HCT116 (cell line): ENCODE measurements at regions of chr1 and their contacts with region 1.

Region 1: GRCh38 chr1:178300352-178300699 is 196.4 kb downstream of the CLEC20A start:
- DNase-seq: no peak
- ATAC-seq: peak; percentile 34; the same call in 1 of the 2 replicates
- H3K4me3 ChIP-seq: no peak overlapping the region
- H3K27ac ChIP-seq: no peak overlapping the region
- H3K4me1 ChIP-seq: peaks cover 4 to 8% of the 10 kb centered on the region in 2 experiments; a peak in 2 of 4 replicates
- H3K27me3 ChIP-seq: no peaks in the 10 kb centered on the region
- CTCF ChIP-seq: no peak
- POLR2A ChIP-seq: no peak
- RAD21 ChIP-seq: no peak

Region 2: GRCh38 chr1:177928194-177928593 is 372.1 kb before region 1 on chr1:
- CTCF ChIA-PET with region 1: no interaction called
- POLR2A ChIA-PET with region 1: no interaction called
- RAD21 ChIA-PET with region 1: no interaction called
- intact Hi-C with region 1: no loop called
- DNase-seq: no peak
- ATAC-seq: 0 out of 2 replicates have a peak, but pooled peaks have one; percentile 57
- H3K4me3 ChIP-seq: no peak overlapping the region
- H3K27ac ChIP-seq: no peak overlapping the region
- H3K4me1 ChIP-seq: peaks cover 0 to 9% of the 10 kb centered on the region in 2 experiments; a peak in 1 of 4 replicates
- H3K27me3 ChIP-seq: no peaks in the 10 kb centered on the region
- CTCF ChIP-seq: 0 out of 6 replicates have a peak, but pooled peaks of 1 of the 3 experiments have one; percentile 11
- POLR2A ChIP-seq: no peak
- RAD21 ChIP-seq: 0 out of 2 replicates have a peak, but pooled peaks have one; percentile 19

Region 3: DNA sequence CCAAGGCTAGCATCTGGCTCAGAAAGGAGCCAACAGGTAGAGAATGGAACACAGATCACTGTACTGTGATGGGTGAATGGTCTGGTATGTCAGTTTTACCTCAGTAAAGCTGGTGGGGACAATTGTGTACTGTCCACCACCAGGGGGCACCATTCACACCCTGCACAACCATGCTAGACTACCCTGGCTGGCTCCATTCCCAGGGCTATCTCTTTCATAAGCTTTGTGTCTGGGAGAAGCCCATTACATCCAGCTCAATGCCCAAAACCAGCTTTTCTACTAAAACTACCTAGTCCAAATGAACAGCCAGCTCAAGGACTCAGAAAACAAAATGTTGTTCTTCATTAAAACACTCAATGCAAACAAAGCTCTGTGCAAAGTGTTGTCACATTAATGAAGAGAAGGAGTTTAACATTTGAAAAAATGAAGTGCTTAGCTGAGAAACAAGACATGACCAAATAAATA is 268.4 kb before region 1 on chr1:
- CTCF ChIA-PET with region 1: interaction called, 28 read pairs
- POLR2A ChIA-PET with region 1: no interaction called
- RAD21 ChIA-PET with region 1: no interaction called
- intact Hi-C with region 1: no loop called
- DNase-seq: peak; percentile 66
- ATAC-seq: peak; percentile 98
- H3K4me3 ChIP-seq: no peak overlapping the region
- H3K27ac ChIP-seq: no peak overlapping the region
- H3K4me1 ChIP-seq: peaks cover 0 to 4% of the 10 kb centered on the region in 2 experiments; a peak in 1 of 4 replicates
- H3K27me3 ChIP-seq: no peaks in the 10 kb centered on the region
- CTCF ChIP-seq: peak; percentile 67 to 93 (median 86); a peak in 5 of 6 replicates
- POLR2A ChIP-seq: no peak
- RAD21 ChIP-seq: peak; percentile 86

Region 4: GRCh38 chr1:178262120-178262500 is 38.2 kb before region 1 on chr1:
- CTCF ChIA-PET with region 1: no interaction called
- POLR2A ChIA-PET with region 1: no interaction called
- RAD21 ChIA-PET with region 1: no interaction called
- intact Hi-C with region 1: no loop called
- DNase-seq: no peak
- ATAC-seq: no peak
- H3K4me3 ChIP-seq: no peak overlapping the region
- H3K27ac ChIP-seq: no peak overlapping the region
- H3K4me1 ChIP-seq: peaks cover 0 to 4% of the 10 kb centered on the region in 2 experiments; a peak in 2 of 4 replicates
- H3K27me3 ChIP-seq: no peaks in the 10 kb centered on the region
- CTCF ChIP-seq: no peak
- POLR2A ChIP-seq: no peak
- RAD21 ChIP-seq: no peak

Region 5: DNA sequence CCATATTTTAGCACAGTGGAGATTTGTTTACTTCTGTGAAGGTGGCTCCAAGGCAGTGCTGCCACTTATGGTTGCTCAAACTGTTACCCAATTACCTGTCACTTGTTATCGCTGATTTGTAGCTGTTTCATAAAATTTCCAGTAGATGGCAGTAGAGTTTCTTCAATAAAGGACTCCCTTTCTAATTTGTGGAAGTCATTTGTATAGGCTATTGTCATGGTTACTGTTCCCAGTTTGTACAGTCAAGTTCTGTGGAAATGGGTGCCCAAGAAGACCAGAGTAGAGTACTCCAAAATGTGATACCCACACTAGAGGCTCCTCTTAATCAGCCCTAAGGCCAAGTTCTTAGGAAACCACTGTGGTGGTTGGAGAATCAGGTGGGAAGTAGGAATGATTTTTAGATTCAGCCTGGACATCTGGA is 10.4 kb after region 1 on chr1:
- CTCF ChIA-PET with region 1: interaction called, 38 read pairs
- POLR2A ChIA-PET with region 1: interaction called, 6 read pairs
- RAD21 ChIA-PET with region 1: interaction called in 1 of 2 experiments, 3 read pairs
- intact Hi-C with region 1: no loop called
- DNase-seq: peak; percentile 64
- ATAC-seq: peak; percentile 91
- H3K4me3 ChIP-seq: no peak overlapping the region
- H3K27ac ChIP-seq: no peak overlapping the region
- H3K4me1 ChIP-seq: peaks cover 8 to 15% of the 10 kb centered on the region in 2 experiments; a peak in 3 of 4 replicates
- H3K27me3 ChIP-seq: no peaks in the 10 kb centered on the region
- CTCF ChIP-seq: peak; percentile 58 to 88 (median 87)
- POLR2A ChIP-seq: no peak
- RAD21 ChIP-seq: peak; percentile 92

Region 6: GRCh38 chr1:178412400-178412770 is 112.1 kb after region 1 on chr1:
- CTCF ChIA-PET with region 1: no interaction called
- POLR2A ChIA-PET with region 1: no interaction called
- RAD21 ChIA-PET with region 1: no interaction called
- intact Hi-C with region 1: no loop called
- DNase-seq: no peak
- ATAC-seq: no peak
- H3K4me3 ChIP-seq: no peak overlapping the region
- H3K27ac ChIP-seq: no peak overlapping the region
- H3K4me1 ChIP-seq: peaks cover 0 to 4% of the 10 kb centered on the region in 2 experiments; a peak in 3 of 4 replicates
- H3K27me3 ChIP-seq: no peaks in the 10 kb centered on the region
- CTCF ChIP-seq: no peak
- POLR2A ChIP-seq: no peak
- RAD21 ChIP-seq: no peak

Region 7: DNA sequence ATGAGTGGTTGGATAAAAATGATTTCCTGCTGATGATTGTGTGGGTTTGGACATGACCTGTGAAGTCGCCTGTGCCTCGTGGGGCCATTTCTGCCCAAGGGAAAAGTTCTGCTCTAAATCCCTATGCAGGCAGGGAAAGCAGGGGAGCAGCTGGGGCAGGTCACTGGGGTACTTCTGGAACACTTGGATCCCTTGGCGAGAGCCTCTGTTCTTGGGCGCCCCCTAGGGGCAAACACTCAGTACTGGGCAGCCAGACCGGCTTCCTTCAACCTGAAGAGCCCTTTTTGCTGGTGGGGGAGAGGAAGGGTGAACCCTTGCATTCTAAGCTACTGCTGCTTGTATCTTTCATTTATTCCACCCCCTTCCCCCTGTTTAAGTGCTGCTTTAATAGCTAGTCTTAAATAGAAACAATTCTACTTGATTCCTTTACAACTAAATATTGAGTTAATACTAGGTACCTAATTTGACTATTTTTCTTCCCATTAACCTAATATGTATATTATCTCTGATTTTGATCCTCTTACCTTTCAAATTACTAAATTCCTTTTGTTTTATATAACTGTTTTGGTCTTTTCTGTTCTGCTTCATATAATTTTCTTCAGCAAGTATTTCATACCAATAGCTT is 201.5 kb after region 1 on chr1:
- CTCF ChIA-PET with region 1: interaction called, 31 read pairs
- POLR2A ChIA-PET with region 1: no interaction called
- RAD21 ChIA-PET with region 1: no interaction called
- intact Hi-C with region 1: no loop called
- DNase-seq: peak; percentile 48
- ATAC-seq: peak; percentile 91
- H3K4me3 ChIP-seq: no peak overlapping the region
- H3K27ac ChIP-seq: no peak overlapping the region
- H3K4me1 ChIP-seq: peaks cover 0 to 7% of the 10 kb centered on the region in 2 experiments; a peak in 1 of 4 replicates
- H3K27me3 ChIP-seq: no peaks in the 10 kb centered on the region
- CTCF ChIP-seq: peak; percentile 80 to 95 (median 85)
- POLR2A ChIP-seq: no peak
- RAD21 ChIP-seq: peak; percentile 80

Region 8: GRCh38 chr1:178847396-178847849 is 547.1 kb after region 1 on chr1:
- CTCF ChIA-PET with region 1: no interaction called
- POLR2A ChIA-PET with region 1: no interaction called
- RAD21 ChIA-PET with region 1: no interaction called
- intact Hi-C with region 1: no loop called
- DNase-seq: peak; percentile 22
- ATAC-seq: peak; percentile 59; the same call in 1 of the 2 replicates
- H3K4me3 ChIP-seq: no peak overlapping the region
- H3K27ac ChIP-seq: no peak overlapping the region; the same call in 1 of the 2 replicates
- H3K4me1 ChIP-seq: peaks cover 6 to 12% of the 10 kb centered on the region in 2 experiments; a peak in 2 of 4 replicates
- H3K27me3 ChIP-seq: no peaks in the 10 kb centered on the region
- CTCF ChIP-seq: no peak
- POLR2A ChIP-seq: no peak
- RAD21 ChIP-seq: no peak

Region 9: GRCh38 chr1:179002552-179003345 is 702.4 kb after region 1 on chr1:
- CTCF ChIA-PET with region 1: interaction called, 16 read pairs
- POLR2A ChIA-PET with region 1: no interaction called
- RAD21 ChIA-PET with region 1: interaction called in 1 of 2 experiments, 4 read pairs
- intact Hi-C with region 1: no loop called
- DNase-seq: no peak
- ATAC-seq: peak; percentile 91
- H3K4me3 ChIP-seq: no peak overlapping the region
- H3K27ac ChIP-seq: no peak overlapping the region
- H3K4me1 ChIP-seq: peaks cover 0 to 11% of the 10 kb centered on the region in 2 experiments; a peak in 3 of 4 replicates
- H3K27me3 ChIP-seq: no peaks in the 10 kb centered on the region
- CTCF ChIP-seq: peak; percentile 96 to 97 (median 97)
- POLR2A ChIP-seq: no peak
- RAD21 ChIP-seq: peak; percentile 98